RWPE1 (cell line): ENCODE measurements at regions of chrX and their contacts with region 1.

Region 1: GRCh38 chrX:119512146-119512800 is 44.0 kb downstream of the SLC25A5 start:
- DNase-seq: peak; percentile 74
- H3K27ac ChIP-seq: peak overlapping the region; percentile 72
- CTCF ChIP-seq: peak; percentile 76

Region 2: DNA sequence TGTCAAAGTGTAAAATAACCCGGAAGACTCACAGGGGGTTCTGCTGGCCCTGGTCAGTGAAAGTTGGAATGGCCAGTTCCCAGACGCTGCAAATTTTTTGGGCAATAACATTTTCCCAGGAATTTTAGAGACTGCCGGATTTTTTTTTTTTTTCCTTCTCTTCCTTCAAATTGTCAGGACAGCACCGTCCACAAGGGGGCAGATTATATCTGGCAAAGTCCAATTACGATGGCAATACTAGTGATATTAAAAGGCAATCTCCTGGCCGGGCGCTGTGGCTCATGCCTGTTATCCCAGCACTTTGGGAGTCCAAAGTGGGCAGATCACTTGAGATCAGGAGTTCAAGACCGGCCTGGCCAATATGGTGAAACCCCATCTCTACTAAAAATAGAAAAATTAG is 23.5 kb before region 1 on chrX:
- CTCF ChIA-PET with region 1: interaction called, 28 read pairs
- POLR2A ChIA-PET with region 1: no interaction called
- DNase-seq: no peak
- H3K27ac ChIP-seq: no peak overlapping the region
- CTCF ChIP-seq: peak; percentile 52